ENCODE measurements at regions of chr2 and their contacts with region 1.

Region 1: DNA sequence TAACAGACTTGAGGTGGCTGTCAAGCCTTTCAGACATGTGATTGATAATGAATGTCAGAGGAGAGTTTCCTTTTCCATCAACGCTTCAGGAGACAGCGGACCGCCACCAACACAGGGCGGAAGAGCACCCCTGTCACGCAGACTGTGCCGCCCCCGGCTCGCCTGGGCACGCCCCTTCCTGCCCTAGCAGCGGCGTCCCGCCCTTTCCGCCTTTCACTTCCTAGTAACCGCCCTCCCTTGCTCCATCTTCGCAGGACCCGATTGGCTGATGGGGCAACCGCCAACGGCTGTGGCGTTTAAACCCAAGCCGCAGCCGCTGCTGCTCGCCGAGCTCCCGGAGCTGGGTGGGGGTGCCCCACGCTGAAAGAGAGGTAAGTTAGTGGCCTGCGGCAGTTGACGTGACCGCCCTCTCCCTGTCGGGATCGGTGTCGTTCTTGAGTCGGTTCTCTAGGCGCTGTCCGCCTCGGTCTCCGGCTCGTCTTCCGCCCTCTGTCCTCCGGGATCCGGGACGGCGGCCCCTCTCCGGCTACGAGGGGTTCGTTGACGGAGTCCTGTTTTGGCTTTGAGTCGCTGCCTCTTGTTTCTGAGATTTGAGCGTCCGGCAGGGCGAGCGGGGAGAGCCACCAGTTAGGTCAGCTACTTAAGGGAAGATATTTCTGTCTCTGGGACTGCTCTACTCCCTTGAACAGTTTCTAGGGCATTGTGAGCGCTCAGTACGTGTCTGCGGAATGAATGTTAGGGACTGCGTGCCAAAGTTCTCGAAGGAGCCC is at the start of gene SGO2:
- DNase-seq: peak; percentile 99
- H3K4me3 Mint-ChIP-seq: peak within 1 kb of the TSS; percentile 94
- H3K27ac Mint-ChIP-seq: peak within 1 kb of the TSS; percentile 92
- H3K4me1 Mint-ChIP-seq: peaks cover 36% of the 10 kb centered on the region
- H3K27me3 Mint-ChIP-seq: no peaks in the 10 kb centered on the region
- total RNA-seq, gene SGO2: 25.7 and 27.2 TPM in 2 replicates

Region 2: GRCh38 chr2:200306196-200306930 is 219.7 kb before region 1 on chr2 and contains the start of gene SPATS2L:
- intact Hi-C with region 1: loop called (anchors 5 kb)
- DNase-seq: peak; percentile 88
- H3K4me3 Mint-ChIP-seq: peak within 1 kb of the TSS; percentile 90
- H3K27ac Mint-ChIP-seq: peak within 1 kb of the TSS; percentile 88
- H3K4me1 Mint-ChIP-seq: peaks cover 29% of the 10 kb centered on the region
- H3K27me3 Mint-ChIP-seq: peaks cover 25% of the 10 kb centered on the region
- total RNA-seq, gene SPATS2L: 42.0 and 42.9 TPM in 2 replicates

Region 3: DNA sequence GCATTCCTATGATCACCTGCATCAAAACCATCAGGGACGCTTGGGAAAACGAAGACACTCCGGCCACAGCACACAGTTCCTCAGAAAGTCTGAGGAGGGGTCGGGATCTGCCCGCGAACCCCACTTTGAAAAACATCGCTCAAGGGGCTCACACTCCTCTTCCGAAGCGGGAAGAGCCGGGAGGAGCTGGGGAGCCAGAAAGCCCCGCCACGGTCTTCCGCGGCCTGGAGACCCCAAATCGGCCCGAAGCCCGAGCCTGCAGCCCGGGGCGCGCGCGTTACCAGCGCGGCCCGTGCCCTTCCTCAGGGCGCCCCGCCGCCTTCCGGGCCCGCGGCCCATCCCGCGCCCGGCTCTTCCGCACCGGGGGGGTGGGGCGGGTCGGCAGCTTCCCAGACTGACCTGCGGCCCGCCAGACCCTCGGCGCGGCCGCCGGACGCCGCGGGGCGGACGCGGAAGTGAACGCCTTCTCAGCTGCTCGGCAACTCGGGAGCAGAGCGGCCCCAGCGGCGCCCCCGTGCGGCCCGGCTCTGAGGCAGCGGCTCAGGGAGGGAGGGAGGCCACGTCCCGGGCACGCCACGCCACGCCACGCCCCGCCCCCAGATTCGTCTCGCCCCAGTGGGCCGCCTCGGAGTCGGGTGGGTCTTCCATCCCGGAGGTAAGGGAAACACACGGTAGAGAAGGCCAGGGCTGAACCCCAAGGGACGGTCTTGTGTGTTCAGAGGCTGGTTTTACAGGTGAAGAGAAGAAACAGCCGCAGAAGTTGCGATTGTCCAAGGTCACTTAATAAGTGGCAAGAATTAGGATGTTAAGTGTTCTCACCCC is 16.2 kb before region 1 on chr2 and contains the start of gene KCTD18:
- intact Hi-C with region 1: loop called (anchors 1 kb)
- DNase-seq: peak; percentile 98
- H3K4me3 Mint-ChIP-seq: peak within 1 kb of the TSS; percentile 96
- H3K27ac Mint-ChIP-seq: peak within 1 kb of the TSS; percentile 91
- H3K4me1 Mint-ChIP-seq: peaks cover 21% of the 10 kb centered on the region
- H3K27me3 Mint-ChIP-seq: no peaks in the 10 kb centered on the region
- total RNA-seq, gene KCTD18: 13.3 and 14.2 TPM in 2 replicates

Region 4: GRCh38 chr2:200703127-200703925 is 177.3 kb after region 1 on chr2:
- intact Hi-C with region 1: loop called (anchors 5 kb)
- DNase-seq: peak; percentile 80
- H3K4me3 Mint-ChIP-seq: peak overlapping the region; percentile 23
- H3K27ac Mint-ChIP-seq: peak overlapping the region; percentile 78
- H3K4me1 Mint-ChIP-seq: peaks cover 28% of the 10 kb centered on the region
- H3K27me3 Mint-ChIP-seq: no peaks in the 10 kb centered on the region

Region 5: GRCh38 chr2:201780674-201781581 is 1254.9 kb after region 1 on chr2 and contains the start of gene ALS2:
- intact Hi-C with region 1: loop called (anchors 5 kb)
- DNase-seq: peak; percentile 99
- H3K4me3 Mint-ChIP-seq: peak within 1 kb of the TSS; percentile 95
- H3K27ac Mint-ChIP-seq: peak within 1 kb of the TSS; percentile 92
- H3K4me1 Mint-ChIP-seq: peaks cover 22% of the 10 kb centered on the region
- H3K27me3 Mint-ChIP-seq: peaks cover 20% of the 10 kb centered on the region
- total RNA-seq, gene ALS2: 10.7 and 11.3 TPM in 2 replicates

Measured in activated CD4-positive, alpha-beta T cell treated with anti-CD3 and anti-CD28 coated beads, Interleukin-2, amount 10 ng/mL, durations not matched to agents 24 days and 14 days (primary cell).